ENCODE measurements at regions of chr22 and their contacts with region 1.

Region 1: GRCh38 chr22:26161746-26162145 is 7.5 kb upstream of the SEZ6L start:
- DNase-seq: no peak
- ATAC-seq: no peak

Region 2: DNA sequence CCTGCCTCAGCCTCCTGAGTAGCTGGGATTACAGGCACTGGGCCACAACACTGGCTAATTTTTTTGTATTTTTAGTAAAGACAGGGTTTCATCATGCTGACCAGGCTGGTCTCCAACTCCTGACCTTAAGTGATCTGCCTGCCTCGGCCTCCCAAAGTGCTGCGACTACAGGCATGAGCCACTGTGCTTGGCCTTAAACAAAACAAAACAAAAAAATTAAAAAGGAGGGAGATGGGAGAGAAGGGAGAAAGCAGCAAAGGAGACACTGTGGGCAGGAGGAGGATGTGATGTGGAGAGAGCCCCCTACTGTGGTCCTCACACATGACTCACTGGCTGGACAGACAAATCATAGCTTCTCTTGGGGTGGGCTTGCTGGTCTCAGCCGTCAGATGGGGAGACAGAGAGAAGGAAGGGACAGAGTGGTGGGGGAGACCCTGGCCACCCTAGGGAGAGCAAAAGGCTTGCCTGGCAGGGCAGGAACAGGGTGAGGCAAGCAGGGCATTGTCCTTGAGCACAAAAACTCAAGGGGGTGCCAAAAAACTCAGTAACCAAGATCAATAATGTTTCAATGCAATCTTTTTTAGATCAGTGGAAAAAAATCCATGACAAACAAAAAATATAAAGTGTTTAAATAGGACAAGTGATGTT is 396.6 kb after region 1 on chr22:
- intact Hi-C with region 1: loop called (anchors 5 kb)
- DNase-seq: no peak
- ATAC-seq: no peak